Sciatic nerve (tissue), 2 donors: ENCODE measurements at regions of chr6 and their contacts with region 1.

Region 1: DNA sequence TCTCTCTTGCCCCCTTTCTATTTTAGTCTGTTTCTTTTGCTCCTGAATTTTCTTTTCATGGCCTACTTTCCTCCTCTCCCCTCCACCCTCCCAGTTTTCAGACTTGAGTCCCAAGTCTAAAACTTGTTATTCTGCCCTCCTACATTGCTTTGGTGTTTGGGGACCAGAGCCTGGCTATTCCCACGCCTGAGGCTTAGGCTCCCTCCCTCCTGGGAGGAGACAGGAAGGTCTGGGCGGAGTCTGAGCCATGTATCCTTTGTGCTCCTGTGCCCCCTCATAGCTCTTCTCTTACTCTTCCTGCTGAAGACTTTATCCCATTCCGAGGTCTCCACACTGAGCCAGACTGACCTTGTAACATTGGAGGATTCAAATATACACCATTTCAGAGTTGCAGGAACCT is 69.5 kb downstream of the DAAM2 start:
- DNase-seq: no peak
- ATAC-seq: peak; percentile 27

Region 2: GRCh38 chr6:39804466-39805065 is 57.1 kb before region 1 on chr6:
- intact Hi-C with region 1: no loop called
- DNase-seq: no peak
- ATAC-seq: no peak

Region 3: GRCh38 chr6:39815356-39815755 is 46.3 kb before region 1 on chr6:
- intact Hi-C with region 1: loop called (anchors 1 kb)
- DNase-seq: no peak
- ATAC-seq: no peak

Region 4: GRCh38 chr6:39902786-39903465 is 41.3 kb after region 1 on chr6:
- intact Hi-C with region 1: no loop called
- DNase-seq: peak; percentile 41
- ATAC-seq: peak; percentile 7

Region 5: DNA sequence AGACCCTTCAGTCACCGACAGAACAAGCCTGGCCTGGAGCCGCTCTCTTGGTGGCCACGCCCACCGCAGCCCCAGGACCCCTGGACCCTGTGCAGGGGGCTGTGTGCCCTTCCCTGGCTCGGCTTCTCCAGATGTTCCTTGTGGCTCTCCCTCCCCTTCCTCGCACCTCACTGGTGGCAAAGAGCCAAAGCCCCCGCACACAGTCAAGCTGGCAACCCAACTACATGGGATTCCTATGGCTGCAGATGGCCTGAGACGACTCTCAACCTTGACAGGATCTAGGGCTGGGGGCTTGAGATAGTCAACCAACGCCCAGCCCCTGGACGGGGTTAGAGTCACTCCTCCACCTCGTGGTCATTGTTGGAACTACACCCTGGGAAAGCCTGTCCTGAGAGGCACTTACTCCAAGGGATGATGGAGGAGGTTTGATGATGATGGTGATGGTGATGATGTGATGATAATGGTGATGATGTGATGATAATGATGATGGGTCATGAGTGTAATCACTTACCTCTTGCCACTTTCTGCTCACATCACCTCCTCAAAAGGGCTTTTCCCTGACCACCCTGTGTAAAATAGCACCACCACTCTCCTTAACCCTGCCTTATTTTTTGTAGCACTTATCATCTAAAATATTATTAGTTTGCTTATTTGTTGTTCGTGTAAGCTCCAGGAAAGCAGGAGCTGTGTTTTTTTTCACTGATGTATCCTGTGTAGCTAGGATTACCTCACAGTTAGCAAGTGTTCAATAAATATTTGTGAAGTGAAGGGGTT is 447.1 kb after region 1 on chr6:
- intact Hi-C with region 1: no loop called
- DNase-seq: peak; percentile 80
- ATAC-seq: peak; percentile 85